ENCODE measurements at regions of chr11 and their contacts with region 1.

Region 1: DNA sequence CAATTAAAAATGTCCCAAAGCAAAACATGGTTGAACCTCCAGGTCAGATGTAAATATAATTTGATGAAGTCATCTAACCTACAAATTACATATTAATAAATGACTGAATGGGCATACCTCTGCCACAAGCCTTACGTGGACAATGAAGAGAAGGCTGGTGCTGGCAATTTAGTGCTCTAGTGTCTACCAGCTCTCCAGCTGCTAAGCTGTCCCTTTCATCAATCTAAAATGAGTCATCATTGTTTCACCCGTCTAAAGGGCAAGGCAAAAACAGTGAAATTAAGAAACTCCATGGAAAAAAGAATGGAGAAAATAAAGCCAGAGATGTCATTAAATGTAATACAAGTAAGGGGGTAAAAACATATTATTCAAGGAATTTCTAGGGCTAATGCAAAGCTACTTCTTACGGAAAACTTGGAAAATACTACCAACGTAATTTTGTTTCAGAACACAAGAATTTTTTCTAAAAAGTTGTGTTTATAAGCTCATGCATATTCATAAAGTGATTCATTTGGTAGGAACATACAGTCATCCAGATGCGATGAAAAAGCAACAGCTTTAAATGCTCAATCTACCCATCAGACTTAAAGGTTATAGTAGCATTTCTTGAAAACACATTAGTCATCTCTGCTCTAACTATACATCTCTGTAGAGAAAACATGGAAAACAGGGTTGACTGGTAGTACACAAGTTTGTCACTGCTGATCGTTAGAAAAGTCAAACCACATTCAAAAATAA is 71.5 kb downstream of the SIK3 start:
- DNase-seq: no peak
- H3K4me3 Mint-ChIP-seq: peak overlapping the region; percentile 13
- H3K27ac Mint-ChIP-seq: peak overlapping the region; percentile 79
- H3K4me1 Mint-ChIP-seq: peaks cover 69% of the 10 kb centered on the region
- H3K27me3 Mint-ChIP-seq: no peaks in the 10 kb centered on the region

Region 2: GRCh38 chr11:116605543-116606459 is 421.0 kb before region 1 on chr11:
- CTCF ChIA-PET with region 1: no interaction called
- POLR2A ChIA-PET with region 1: no interaction called
- intact Hi-C with region 1: no loop called
- DNase-seq: peak; percentile 54
- H3K4me3 Mint-ChIP-seq: no peak overlapping the region
- H3K27ac Mint-ChIP-seq: no peak overlapping the region
- H3K4me1 Mint-ChIP-seq: no peaks in the 10 kb centered on the region
- H3K27me3 Mint-ChIP-seq: peaks cover 6% of the 10 kb centered on the region

Region 3: GRCh38 chr11:116879800-116880625 is 146.7 kb before region 1 on chr11:
- CTCF ChIA-PET with region 1: interaction called, 9 read pairs
- POLR2A ChIA-PET with region 1: no interaction called
- intact Hi-C with region 1: loop called (anchors 2 kb)
- DNase-seq: no peak
- H3K4me3 Mint-ChIP-seq: no peak overlapping the region
- H3K27ac Mint-ChIP-seq: no peak overlapping the region
- H3K4me1 Mint-ChIP-seq: peaks cover 28% of the 10 kb centered on the region
- H3K27me3 Mint-ChIP-seq: no peaks in the 10 kb centered on the region

Region 4: GRCh38 chr11:117002639-117003299 is 24.0 kb before region 1 on chr11:
- CTCF ChIA-PET with region 1: interaction called, 5 read pairs
- POLR2A ChIA-PET with region 1: interaction called, 11 read pairs
- intact Hi-C with region 1: no loop called
- DNase-seq: no peak
- H3K4me3 Mint-ChIP-seq: peak overlapping the region; percentile 16
- H3K27ac Mint-ChIP-seq: peak overlapping the region; percentile 80
- H3K4me1 Mint-ChIP-seq: peaks cover 69% of the 10 kb centered on the region
- H3K27me3 Mint-ChIP-seq: no peaks in the 10 kb centered on the region

Region 5: GRCh38 chr11:117039900-117040299 is 13.1 kb after region 1 on chr11:
- CTCF ChIA-PET with region 1: interaction called, 9 read pairs
- POLR2A ChIA-PET with region 1: interaction called, 10 read pairs
- intact Hi-C with region 1: loop called (anchors 1 kb)
- DNase-seq: peak; percentile 59
- H3K4me3 Mint-ChIP-seq: no peak overlapping the region
- H3K27ac Mint-ChIP-seq: no peak overlapping the region
- H3K4me1 Mint-ChIP-seq: peaks cover 75% of the 10 kb centered on the region
- H3K27me3 Mint-ChIP-seq: no peaks in the 10 kb centered on the region

Region 6: DNA sequence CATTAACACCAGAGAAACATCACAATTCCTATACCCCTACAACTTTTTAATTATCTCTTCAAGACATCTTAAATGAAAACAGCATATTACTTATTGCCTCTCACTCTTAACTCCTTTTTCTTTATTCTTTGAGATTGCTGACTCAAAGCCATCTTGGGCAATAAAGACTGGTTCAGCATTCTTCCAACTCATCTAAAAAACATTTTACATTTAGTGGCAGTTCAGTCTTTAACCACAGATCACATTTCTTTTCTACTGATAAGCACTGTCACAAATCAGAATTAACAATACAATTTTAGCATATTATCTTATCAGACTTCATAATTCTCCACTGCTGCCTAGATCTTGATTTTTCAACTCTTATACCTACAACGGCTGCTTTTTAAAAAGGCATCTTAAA is 37.5 kb after region 1 on chr11:
- CTCF ChIA-PET with region 1: interaction called, 4 read pairs
- POLR2A ChIA-PET with region 1: interaction called, 13 read pairs
- intact Hi-C with region 1: loop called (anchors 1 kb)
- DNase-seq: no peak
- H3K4me3 Mint-ChIP-seq: peak overlapping the region; percentile 34
- H3K27ac Mint-ChIP-seq: peak overlapping the region; percentile 81
- H3K4me1 Mint-ChIP-seq: peaks cover 79% of the 10 kb centered on the region
- H3K27me3 Mint-ChIP-seq: no peaks in the 10 kb centered on the region

Region 7: GRCh38 chr11:117092951-117093590 is 66.3 kb after region 1 on chr11:
- CTCF ChIA-PET with region 1: no interaction called
- POLR2A ChIA-PET with region 1: interaction called, 8 read pairs
- intact Hi-C with region 1: loop called (anchors 1 kb)
- DNase-seq: no peak
- H3K4me3 Mint-ChIP-seq: peak overlapping the region; percentile 40
- H3K27ac Mint-ChIP-seq: peak overlapping the region; percentile 73
- H3K4me1 Mint-ChIP-seq: peaks cover 75% of the 10 kb centered on the region
- H3K27me3 Mint-ChIP-seq: no peaks in the 10 kb centered on the region

Measured in activated CD4-positive, alpha-beta memory T cell treated with anti-CD3 and anti-CD28 coated beads for 36 hours (primary cell).